ENCODE measurements at regions of chr5 and their contacts with region 1.

Region 1: DNA sequence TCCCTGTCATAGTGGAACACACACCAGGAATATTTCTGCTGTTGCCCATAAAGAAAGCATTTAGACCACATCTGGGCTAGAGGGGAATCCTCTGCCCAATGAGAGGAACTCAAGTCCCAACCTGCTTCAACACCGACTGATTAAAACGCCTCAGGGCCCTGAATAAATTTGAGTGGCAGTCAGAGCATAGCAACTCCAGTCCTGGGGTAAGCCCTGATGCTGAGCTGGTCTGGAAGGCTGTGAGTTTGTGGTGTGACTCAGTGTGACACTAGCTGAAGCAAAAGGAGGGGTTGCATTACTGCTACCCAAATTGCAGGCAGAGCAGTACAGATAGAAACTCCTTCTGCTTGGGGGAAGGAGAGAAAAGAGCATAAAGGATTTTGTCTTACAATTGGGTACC is 148.3 kb downstream of the PRDM9 start:
- DNase-seq: no peak
- ATAC-seq: no peak
- H3K4me3 ChIP-seq: no peak overlapping the region
- H3K27ac ChIP-seq: no peak overlapping the region
- H3K4me1 ChIP-seq: no peaks in the 10 kb centered on the region
- H3K27me3 ChIP-seq: no peaks in the 10 kb centered on the region
- CTCF ChIP-seq: no peak

Region 2: DNA sequence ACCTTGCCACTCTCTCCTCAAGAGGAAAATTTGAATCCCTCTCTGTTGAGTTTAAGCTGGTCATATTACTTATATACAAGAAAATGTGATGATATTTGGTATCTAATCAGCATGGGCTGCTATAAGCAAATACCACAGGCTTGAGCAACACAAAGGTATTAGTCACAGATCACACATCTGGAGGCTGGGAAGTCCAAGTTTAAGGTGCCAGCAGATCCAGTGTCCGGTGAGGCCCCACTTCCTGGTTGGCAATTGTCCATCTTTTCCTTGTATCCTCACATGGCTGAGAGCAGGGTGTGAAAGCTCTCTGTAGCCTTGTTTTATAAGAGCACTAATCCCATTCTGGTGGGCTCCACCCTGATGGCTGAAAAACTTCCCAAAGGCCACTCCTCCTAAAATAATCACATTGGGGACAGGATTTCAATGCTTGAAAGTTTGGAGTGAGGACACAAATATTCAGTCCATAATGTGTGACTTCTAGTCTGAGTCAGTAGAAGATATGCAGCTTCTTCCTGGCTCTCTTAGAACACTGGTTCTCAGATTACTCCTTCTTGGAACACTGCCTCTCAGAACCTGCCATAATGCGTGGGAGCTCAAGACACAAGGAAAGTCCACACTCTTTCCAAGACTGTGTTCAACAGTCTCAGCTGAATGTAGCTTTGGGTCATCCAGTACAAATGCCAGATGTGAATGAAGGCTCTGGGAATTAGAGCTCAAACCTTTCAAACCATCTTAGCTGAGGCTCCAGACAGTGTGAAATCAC is 24.2 kb before region 1 on chr5:
- intact Hi-C with region 1: loop called in 1 of 10 experiments (anchors 2 kb)
- DNase-seq: peak in 1 of 2 donors; percentile 30
- ATAC-seq: peak in 7 of 8 donors; percentile 61 to 95 (median 78)
- H3K4me3 ChIP-seq: no peak overlapping the region
- H3K27ac ChIP-seq: peak overlapping the region in 1 of 10 donors; percentile 30
- H3K4me1 ChIP-seq: no peaks in the 10 kb centered on the region
- H3K27me3 ChIP-seq: no peaks in the 10 kb centered on the region
- CTCF ChIP-seq: no peak

Measured in heart right ventricle (tissue), 16 donors.